ENCODE measurements at regions of chr5 and their contacts with region 1.

Region 1: GRCh38 chr5:141878711-141879425 is 658 bp upstream of the PCDH1 start:
- DNase-seq: peak; percentile 77 to 96
- ATAC-seq: peak; percentile 76 to 90 (median 84)
- H3K4me3 ChIP-seq: peak overlapping the region; percentile 38 to 92 (median 84)
- H3K27ac ChIP-seq: peak overlapping the region; percentile 77 to 97 (median 93)
- H3K4me1 ChIP-seq: peaks cover 5 to 95% (median 60%) of the 10 kb centered on the region in 9 donors
- H3K27me3 ChIP-seq: peaks cover 8 to 94% (median 60%) of the 10 kb centered on the region in 7 donors
- CTCF ChIP-seq: peak; percentile 96 to 99 (median 98)

Region 2: DNA sequence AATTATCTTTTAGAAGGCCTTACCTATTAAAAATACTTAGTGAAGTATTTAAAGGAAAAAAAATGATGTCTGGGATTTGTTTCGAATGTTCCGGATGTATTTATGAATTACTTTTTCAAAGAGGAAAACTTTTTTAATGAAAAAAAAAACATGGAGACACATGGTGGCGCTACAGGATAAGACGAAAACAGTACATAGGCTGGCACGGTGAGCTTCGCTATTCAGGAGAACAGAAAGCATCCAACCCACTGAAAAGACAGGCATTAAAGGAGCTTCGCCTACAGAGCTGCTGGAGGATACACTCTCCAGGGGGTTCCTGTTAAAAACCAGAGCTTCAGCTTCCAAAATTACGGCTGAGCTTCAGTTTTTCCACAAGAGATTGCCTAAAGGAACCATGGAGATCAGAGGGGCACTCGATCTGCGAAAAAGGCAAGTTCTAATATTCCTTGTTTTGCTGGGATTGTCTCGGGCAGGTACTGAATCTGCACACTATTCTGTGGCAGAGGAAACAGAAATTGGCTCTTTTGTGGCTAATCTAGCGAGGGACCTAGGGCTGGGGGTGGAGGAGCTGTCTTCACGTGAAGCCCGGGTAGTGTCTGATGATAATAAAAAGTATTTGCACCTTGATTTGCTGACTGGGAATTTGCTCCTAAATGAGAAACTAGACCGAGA is 655.6 kb before region 1 on chr5 and contains the start of gene PCDHB14:
- intact Hi-C with region 1: no loop called
- DNase-seq: no peak
- ATAC-seq: peak in 1 of 8 donors; percentile 65
- H3K4me3 ChIP-seq: peak within 1 kb of the TSS in 7 of 10 donors; percentile 12 to 40 (median 29)
- H3K27ac ChIP-seq: no peak within 1 kb of the TSS
- H3K4me1 ChIP-seq: no peaks in the 10 kb centered on the region
- H3K27me3 ChIP-seq: peaks cover 0 to 13% (median 0%) of the 10 kb centered on the region in 7 donors
- CTCF ChIP-seq: peak in 6 of 9 donors; percentile 15 to 43 (median 26)
- total RNA-seq, gene PCDHB14: 1.4 to 9.0 (median 4.2) TPM

Region 3: GRCh38 chr5:141681695-141682641 is 196.9 kb before region 1 on chr5 and contains the start of gene ARAP3:
- intact Hi-C with region 1: loop called in 1 of 10 experiments (anchors 5 kb)
- DNase-seq: peak; percentile 88 to 90
- ATAC-seq: peak; percentile 85 to 95 (median 87)
- H3K4me3 ChIP-seq: peak within 1 kb of the TSS; percentile 18 to 68 (median 58)
- H3K27ac ChIP-seq: peak within 1 kb of the TSS; percentile 76 to 96 (median 90)
- H3K4me1 ChIP-seq: peaks cover 2 to 74% (median 38%) of the 10 kb centered on the region in 9 donors
- H3K27me3 ChIP-seq: no peaks in the 10 kb centered on the region
- CTCF ChIP-seq: no peak
- total RNA-seq, gene ARAP3: 10.8 to 21.9 (median 13.4) TPM

Region 4: GRCh38 chr5:141711687-141712086 is 167.2 kb before region 1 on chr5:
- intact Hi-C with region 1: no loop called
- DNase-seq: no peak
- ATAC-seq: no peak
- H3K4me3 ChIP-seq: no peak overlapping the region
- H3K27ac ChIP-seq: no peak overlapping the region
- H3K4me1 ChIP-seq: peaks cover 0 to 21% (median 11%) of the 10 kb centered on the region in 9 donors
- H3K27me3 ChIP-seq: peaks cover 0 to 18% (median 0%) of the 10 kb centered on the region in 7 donors
- CTCF ChIP-seq: no peak

Region 5: GRCh38 chr5:141762790-141763368 is 116.0 kb before region 1 on chr5:
- intact Hi-C with region 1: loop called in 1 of 10 experiments (anchors 2 kb)
- DNase-seq: peak in 1 of 2 donors; percentile 49
- ATAC-seq: peak; percentile 46 to 82 (median 68)
- H3K4me3 ChIP-seq: no peak overlapping the region
- H3K27ac ChIP-seq: peak overlapping the region in 2 of 10 donors; percentile 26 to 72
- H3K4me1 ChIP-seq: peaks cover 2 to 33% (median 15%) of the 10 kb centered on the region in 9 donors
- H3K27me3 ChIP-seq: peaks cover 0 to 33% (median 17%) of the 10 kb centered on the region in 7 donors
- CTCF ChIP-seq: peak in 5 of 9 donors; percentile 32 to 50 (median 42)

Region 6: GRCh38 chr5:141816598-141817372 is 62.1 kb before region 1 on chr5:
- intact Hi-C with region 1: loop called in 5 of 10 experiments (anchors 2 to 5 kb)
- DNase-seq: peak; percentile 39 to 74
- ATAC-seq: peak; percentile 53 to 85 (median 81)
- H3K4me3 ChIP-seq: no peak overlapping the region
- H3K27ac ChIP-seq: peak overlapping the region; percentile 69 to 94 (median 82)
- H3K4me1 ChIP-seq: peaks cover 6 to 68% (median 31%) of the 10 kb centered on the region in 9 donors
- H3K27me3 ChIP-seq: peaks cover 0 to 8% (median 4%) of the 10 kb centered on the region in 7 donors
- CTCF ChIP-seq: no peak

Region 7: GRCh38 chr5:141849375-141850243 is 29.3 kb before region 1 on chr5:
- intact Hi-C with region 1: loop called in 3 of 10 experiments (anchors 1 to 2 kb)
- DNase-seq: peak; percentile 90 to 93
- ATAC-seq: peak; percentile 84 to 95 (median 93)
- H3K4me3 ChIP-seq: peak overlapping the region; percentile 48 to 85 (median 68)
- H3K27ac ChIP-seq: peak overlapping the region; percentile 59 to 99 (median 96)
- H3K4me1 ChIP-seq: peaks cover 5 to 54% (median 33%) of the 10 kb centered on the region in 9 donors
- H3K27me3 ChIP-seq: peaks cover 0 to 9% (median 0%) of the 10 kb centered on the region in 7 donors
- CTCF ChIP-seq: peak in 2 of 9 donors; percentile 9 to 22

Region 8: DNA sequence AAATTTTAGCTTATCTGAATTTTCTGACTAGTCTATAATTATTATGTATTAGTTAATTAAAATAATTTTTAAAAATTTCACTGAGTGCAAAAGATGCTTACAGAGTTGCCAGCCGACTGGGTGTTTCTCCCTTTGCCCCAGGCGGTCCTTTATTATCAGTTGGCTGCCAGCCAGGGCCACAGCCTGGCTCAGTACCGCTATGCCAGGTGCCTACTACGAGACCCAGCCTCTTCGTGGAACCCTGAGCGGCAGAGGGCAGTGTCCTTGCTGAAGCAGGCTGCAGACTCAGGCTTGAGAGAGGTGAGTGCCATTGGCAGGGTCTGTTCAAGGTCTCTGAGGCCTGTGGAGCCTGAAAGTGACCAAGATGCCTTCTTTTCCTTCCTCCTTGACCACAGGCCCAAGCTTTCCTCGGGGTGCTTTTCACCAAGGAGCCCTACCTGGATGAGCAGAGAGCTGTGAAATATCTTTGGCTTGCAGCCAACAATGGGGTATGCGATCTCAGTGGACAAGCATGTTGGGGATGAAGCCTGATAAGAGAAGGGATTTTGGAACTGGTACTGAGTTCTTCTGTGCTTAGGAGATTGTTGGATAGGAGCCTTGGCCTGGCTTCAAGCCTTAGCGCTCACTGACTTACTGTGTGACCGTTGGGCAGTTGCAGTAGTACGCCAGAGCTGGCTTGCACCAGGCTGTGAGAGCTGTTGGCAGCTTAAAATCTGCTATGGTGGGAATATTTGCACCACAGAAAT is 55.4 kb after region 1 on chr5:
- intact Hi-C with region 1: no loop called
- DNase-seq: peak; percentile 53 to 62
- ATAC-seq: peak; percentile 65 to 92 (median 76)
- H3K4me3 ChIP-seq: no peak overlapping the region
- H3K27ac ChIP-seq: peak overlapping the region in 4 of 10 donors; percentile 44 to 69 (median 60)
- H3K4me1 ChIP-seq: peaks cover 0 to 36% (median 9%) of the 10 kb centered on the region in 9 donors
- H3K27me3 ChIP-seq: no peaks in the 10 kb centered on the region
- CTCF ChIP-seq: peak in 3 of 9 donors; percentile 28 to 43 (median 34)

Region 9: GRCh38 chr5:141951332-141951781 is 72.5 kb after region 1 on chr5:
- intact Hi-C with region 1: loop called in 5 of 10 experiments (anchors 5 to 10 kb)
- DNase-seq: peak in 1 of 2 donors; percentile 54
- ATAC-seq: peak; percentile 13 to 73 (median 62)
- H3K4me3 ChIP-seq: peak overlapping the region in 8 of 10 donors; percentile 5 to 60 (median 54)
- H3K27ac ChIP-seq: peak overlapping the region in 8 of 10 donors; percentile 14 to 89 (median 74)
- H3K4me1 ChIP-seq: peaks cover 2 to 80% (median 54%) of the 10 kb centered on the region in 9 donors
- H3K27me3 ChIP-seq: no peaks in the 10 kb centered on the region
- CTCF ChIP-seq: peak in 7 of 9 donors; percentile 34 to 54 (median 41)

Measured in heart right ventricle (tissue), 16 donors.